ENCODE measurements at regions of chr1 and their contacts with region 1.

Region 1: DNA sequence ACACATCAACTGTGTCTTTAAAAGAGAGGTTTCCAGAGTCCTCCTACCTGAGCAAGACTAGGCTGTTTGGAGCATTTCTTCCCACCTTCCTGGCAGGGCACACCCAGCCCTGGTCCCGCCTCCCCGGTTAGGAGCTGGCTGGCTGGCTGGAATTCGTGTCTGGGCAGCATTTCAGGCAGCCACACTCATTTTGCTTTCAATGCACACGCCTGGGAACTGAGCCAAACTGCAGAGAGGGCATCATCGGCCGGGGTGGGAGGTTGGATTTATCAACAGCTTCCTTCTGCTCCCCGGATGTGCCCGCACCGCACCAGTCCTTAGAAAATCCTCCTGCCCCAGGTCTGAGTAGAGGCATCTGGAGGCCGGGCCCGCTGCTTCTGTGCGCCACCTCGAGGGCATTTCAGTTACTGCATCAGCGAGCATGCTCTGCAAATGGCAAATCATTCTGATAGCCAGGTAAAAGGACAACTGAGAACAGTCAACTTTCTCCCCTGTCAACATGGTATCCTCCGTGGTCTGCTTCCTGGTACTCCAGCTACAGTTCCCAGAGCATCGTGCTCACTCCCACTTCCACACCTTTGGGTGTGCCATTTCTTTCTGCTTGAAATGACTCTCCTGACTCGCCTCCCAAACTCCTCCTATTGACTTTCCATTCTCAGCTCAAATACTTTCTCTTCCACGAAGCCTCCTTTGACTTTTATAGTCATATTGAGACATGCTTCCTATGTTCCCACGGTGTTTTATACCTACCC is 20.6 kb downstream of the TCEA3 start:
- DNase-seq: peak; percentile 80 to 91 (median 86)
- H3K4me3 ChIP-seq: peak overlapping the region in 43 of 59 donors; percentile 1 to 55 (median 32)
- H3K27ac ChIP-seq: peak overlapping the region in 36 of 59 donors; percentile 5 to 70 (median 44)
- H3K27me3 ChIP-seq: no peaks in the 10 kb centered on the region
- CTCF ChIP-seq: peak; percentile 79 to 99 (median 94)

Region 2: DNA sequence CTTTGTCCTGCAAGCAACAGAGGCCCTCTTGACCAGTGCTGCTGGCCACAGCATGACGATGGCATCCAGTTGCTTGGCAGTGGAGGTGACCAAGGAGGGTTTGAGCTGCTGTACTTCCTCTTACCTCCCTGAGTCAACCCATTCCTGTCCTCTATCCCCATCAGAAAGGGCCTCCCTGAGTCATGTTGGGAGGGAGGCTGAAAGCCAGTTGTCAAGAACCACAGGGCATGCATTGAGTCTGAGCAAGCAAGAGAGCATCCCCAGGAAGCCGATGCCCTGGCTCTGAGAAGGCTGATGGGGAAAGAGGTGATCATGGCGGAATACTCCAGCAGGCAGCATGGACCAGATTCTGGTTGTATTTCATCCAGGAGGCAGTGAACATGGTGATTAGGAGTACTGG is 500.8 kb before region 1 on chr1:
- intact Hi-C with region 1: no loop called
- DNase-seq: no peak
- H3K4me3 ChIP-seq: no peak overlapping the region
- H3K27ac ChIP-seq: no peak overlapping the region
- H3K27me3 ChIP-seq: no peaks in the 10 kb centered on the region
- CTCF ChIP-seq: no peak

Region 3: DNA sequence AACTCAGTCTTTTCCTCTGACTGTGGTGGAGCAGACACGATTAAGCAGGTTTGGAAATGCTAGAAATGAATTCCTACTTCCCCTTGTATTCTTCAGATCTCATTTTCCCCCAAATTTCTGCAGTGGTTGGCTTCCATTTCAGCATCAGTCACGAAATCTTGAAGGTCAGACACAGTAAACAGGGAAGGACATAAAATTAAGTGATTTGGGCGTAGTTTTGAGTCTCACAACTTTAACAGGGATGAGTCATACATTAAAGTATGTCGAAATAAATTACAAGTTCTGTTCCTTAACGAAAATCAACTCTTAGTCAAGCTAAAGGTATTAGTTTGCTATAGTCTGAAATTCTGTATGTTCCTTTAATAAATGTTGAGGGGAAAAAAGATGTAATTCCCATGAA is 121.0 kb before region 1 on chr1:
- intact Hi-C with region 1: loop called in 1 of 2 experiments (anchors 10 kb)
- DNase-seq: no peak
- H3K4me3 ChIP-seq: no peak overlapping the region
- H3K27ac ChIP-seq: peak overlapping the region in 1 of 59 donors; percentile 9
- H3K27me3 ChIP-seq: no peaks in the 10 kb centered on the region
- CTCF ChIP-seq: no peak

Region 4: DNA sequence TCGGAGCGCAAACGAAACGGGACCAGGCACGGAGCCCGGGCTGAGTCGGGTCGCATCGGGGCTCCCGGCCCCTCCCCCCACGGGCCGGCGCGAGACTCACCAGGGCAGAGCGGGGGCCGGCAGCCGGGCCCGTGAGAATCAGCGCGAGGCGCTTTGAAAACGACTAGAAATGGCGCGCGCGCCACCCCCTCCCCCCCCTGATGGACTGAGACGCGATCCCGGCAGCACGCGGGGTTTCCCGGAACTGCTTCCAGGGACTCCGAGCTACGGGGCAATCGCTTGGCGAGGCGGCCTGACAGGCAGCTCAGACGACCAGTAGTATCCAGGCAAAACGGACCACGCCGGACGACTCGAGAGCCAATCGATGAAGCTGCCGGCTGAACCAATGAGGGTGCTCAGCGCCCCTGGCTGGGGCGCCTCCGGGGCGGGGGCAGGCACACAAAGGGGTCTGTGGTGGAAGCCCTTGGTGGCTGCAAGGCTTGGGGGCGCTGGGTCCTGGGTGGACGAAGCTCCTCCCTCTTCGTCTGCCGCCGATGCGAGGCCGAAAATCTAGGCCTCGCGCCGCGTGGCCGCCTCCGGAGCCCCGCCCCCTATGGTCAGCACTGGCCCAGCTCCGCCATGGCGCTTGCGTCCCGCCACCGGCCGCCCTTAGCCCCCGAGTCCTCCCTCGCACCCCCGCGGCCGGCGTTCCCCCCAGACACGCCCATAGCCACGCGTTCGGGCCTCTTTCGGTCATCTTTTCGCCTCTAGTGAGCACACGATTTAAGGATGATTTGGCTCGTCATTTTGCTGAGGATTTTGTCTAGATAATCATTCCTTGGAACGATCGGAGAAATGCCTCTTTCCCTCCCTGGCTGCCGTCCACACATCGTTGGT is 59.6 kb before region 1 on chr1 and contains the start of gene HNRNPR:
- intact Hi-C with region 1: loop called (anchors 2 to 5 kb)
- DNase-seq: peak; percentile 99 to 100 (median 100)
- H3K4me3 ChIP-seq: peak within 1 kb of the TSS; percentile 54 to 98 (median 87)
- H3K27ac ChIP-seq: peak within 1 kb of the TSS; percentile 83 to 99 (median 96)
- H3K27me3 ChIP-seq: no peaks in the 10 kb centered on the region
- CTCF ChIP-seq: peak in 45 of 56 donors; percentile 5 to 58 (median 35)
- total RNA-seq, gene HNRNPR: 86.5 to 128 (median 105) TPM

Region 5: GRCh38 chr1:23367791-23368561 is 35.9 kb before region 1 on chr1:
- intact Hi-C with region 1: loop called in 1 of 2 experiments (anchors 5 kb)
- DNase-seq: peak; percentile 98 to 99 (median 99)
- H3K4me3 ChIP-seq: peak overlapping the region; percentile 68 to 100 (median 93)
- H3K27ac ChIP-seq: peak overlapping the region; percentile 92 to 100 (median 99)
- H3K27me3 ChIP-seq: no peaks in the 10 kb centered on the region
- CTCF ChIP-seq: peak in 43 of 56 donors; percentile 11 to 58 (median 35)

Region 6: GRCh38 chr1:23470282-23471071 is 66.6 kb after region 1 on chr1:
- intact Hi-C with region 1: no loop called
- DNase-seq: no peak
- H3K4me3 ChIP-seq: no peak overlapping the region
- H3K27ac ChIP-seq: peak overlapping the region in 15 of 59 donors; percentile 1 to 55 (median 29)
- H3K27me3 ChIP-seq: no peaks in the 10 kb centered on the region
- CTCF ChIP-seq: no peak

Region 7: DNA sequence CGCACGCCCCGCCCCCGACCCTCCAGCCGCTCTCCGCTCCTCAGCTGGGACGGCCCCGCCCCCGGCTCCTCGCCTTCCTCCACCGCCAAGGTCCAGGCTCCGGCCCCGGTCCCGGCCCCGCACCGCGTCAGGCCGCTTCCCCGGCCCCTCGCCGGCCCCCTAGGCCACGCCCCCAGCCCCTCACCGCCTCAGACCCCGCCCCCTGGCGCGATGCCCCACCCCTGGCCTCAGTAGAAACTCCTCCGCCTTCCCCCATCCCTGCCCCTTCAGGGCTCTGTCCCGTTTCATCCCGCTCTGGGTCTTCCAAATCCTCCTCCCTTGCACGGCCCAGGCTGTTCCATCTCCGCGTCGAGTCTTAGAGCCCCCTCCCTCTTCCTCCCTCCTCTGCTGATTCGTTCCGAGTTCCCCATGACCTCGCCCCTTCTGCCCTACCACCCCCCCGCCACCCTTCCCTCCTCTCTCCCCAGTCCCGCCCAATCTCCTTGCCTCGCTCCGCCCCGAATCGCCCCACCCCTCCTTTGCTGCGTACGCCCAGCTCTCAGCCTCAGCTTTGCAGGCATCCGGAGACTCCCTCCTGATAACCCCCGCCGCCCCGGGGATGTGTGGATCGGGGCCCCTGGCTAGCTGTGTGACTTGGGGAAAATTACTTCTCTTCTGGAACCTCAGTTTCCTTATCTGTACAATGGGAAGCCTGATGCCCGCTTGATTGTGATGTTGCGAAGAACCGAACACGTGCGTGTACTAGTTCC is 80.5 kb after region 1 on chr1:
- intact Hi-C with region 1: loop called in 1 of 2 experiments (anchors 5 kb)
- DNase-seq: peak; percentile 24 to 80 (median 68)
- H3K4me3 ChIP-seq: peak overlapping the region; percentile 56 to 92 (median 82)
- H3K27ac ChIP-seq: peak overlapping the region in 40 of 59 donors; percentile 4 to 87 (median 65)
- H3K27me3 ChIP-seq: no peaks in the 10 kb centered on the region
- CTCF ChIP-seq: peak in 4 of 56 donors; percentile 1 to 39 (median 5)